ENCODE measurements at regions of chr4 and their contacts with region 1.

Region 1: DNA sequence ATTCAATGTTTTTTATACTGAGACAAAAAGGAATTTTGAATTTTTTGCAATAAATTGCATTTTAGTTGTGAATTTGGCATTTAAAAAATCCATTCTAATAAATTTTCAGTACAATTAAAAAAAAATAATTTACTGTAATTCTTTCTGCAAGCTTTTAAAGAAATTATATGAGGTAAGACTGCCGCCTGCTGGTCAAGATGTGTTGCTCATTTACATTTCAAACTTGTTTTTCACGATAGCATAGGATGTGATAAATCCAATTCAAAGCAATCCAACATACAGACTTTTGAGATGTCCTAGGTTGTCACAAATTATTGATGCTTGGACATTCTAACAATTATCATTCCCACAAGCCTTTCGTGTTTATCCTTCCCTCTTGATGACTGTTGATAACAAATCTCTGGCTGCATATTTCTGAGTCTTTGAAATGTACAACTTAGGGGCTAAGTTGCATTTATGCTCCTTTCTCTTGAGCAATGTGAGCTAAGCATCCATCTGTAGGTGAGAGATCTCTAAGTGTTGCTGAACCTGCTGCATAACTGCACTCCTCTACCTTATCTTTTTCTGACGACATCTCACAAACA is 21.7 kb upstream of the MFAP3L start:
- DNase-seq: peak; percentile 65
- ATAC-seq: no peak
- H3K4me3 ChIP-seq: no peak overlapping the region
- H3K27ac ChIP-seq: no peak overlapping the region
- H3K4me1 ChIP-seq: no peaks in the 10 kb centered on the region
- H3K27me3 ChIP-seq: no peaks in the 10 kb centered on the region
- CTCF ChIP-seq: peak; percentile 71

Region 2: GRCh38 chr4:168784786-168785461 is 1262.9 kb before region 1 on chr4:
- CTCF ChIA-PET with region 1: no interaction called
- POLR2A ChIA-PET with region 1: no interaction called
- intact Hi-C with region 1: no loop called
- DNase-seq: peak; percentile 10
- ATAC-seq: no peak
- H3K4me3 ChIP-seq: no peak overlapping the region
- H3K27ac ChIP-seq: no peak overlapping the region
- H3K4me1 ChIP-seq: no peaks in the 10 kb centered on the region
- H3K27me3 ChIP-seq: no peaks in the 10 kb centered on the region
- CTCF ChIP-seq: no peak

Region 3: DNA sequence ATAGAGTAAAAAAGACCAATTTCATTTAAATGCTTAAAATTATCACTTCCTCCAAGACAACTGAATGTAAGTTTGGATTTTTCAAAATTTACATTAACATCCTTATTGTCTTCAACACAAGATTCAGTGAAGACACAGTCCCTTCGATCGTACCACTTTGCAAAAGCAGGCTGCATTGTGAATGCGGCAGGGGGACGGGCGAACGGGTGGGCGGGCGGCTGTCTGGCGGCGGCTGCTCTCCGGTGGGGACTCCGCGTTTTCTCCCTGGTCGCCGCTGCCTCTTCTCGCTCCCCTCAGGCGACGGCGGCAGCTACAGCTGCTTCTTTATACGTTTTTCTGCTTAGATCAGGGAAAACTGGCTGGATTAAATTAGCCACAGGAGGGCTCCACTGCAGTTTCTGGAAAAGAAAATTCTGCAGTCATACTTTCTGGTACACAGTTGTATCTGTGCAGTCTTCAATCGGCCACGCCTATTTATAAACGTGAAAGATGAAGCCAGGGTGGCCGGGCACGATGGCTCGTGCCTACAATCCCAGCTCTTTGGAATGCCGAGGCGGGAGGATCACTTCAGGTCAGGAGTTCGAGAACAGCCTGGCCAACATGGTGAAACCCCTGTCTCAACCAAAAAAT is 256.2 kb before region 1 on chr4:
- CTCF ChIA-PET with region 1: no interaction called
- POLR2A ChIA-PET with region 1: no interaction called
- intact Hi-C with region 1: loop called (anchors 1 kb)
- DNase-seq: peak; percentile 71
- ATAC-seq: peak; percentile 81
- H3K4me3 ChIP-seq: peak overlapping the region; percentile 58
- H3K27ac ChIP-seq: no peak overlapping the region
- H3K4me1 ChIP-seq: no peaks in the 10 kb centered on the region
- H3K27me3 ChIP-seq: peaks cover 22% of the 10 kb centered on the region
- CTCF ChIP-seq: peak; percentile 58

Region 4: DNA sequence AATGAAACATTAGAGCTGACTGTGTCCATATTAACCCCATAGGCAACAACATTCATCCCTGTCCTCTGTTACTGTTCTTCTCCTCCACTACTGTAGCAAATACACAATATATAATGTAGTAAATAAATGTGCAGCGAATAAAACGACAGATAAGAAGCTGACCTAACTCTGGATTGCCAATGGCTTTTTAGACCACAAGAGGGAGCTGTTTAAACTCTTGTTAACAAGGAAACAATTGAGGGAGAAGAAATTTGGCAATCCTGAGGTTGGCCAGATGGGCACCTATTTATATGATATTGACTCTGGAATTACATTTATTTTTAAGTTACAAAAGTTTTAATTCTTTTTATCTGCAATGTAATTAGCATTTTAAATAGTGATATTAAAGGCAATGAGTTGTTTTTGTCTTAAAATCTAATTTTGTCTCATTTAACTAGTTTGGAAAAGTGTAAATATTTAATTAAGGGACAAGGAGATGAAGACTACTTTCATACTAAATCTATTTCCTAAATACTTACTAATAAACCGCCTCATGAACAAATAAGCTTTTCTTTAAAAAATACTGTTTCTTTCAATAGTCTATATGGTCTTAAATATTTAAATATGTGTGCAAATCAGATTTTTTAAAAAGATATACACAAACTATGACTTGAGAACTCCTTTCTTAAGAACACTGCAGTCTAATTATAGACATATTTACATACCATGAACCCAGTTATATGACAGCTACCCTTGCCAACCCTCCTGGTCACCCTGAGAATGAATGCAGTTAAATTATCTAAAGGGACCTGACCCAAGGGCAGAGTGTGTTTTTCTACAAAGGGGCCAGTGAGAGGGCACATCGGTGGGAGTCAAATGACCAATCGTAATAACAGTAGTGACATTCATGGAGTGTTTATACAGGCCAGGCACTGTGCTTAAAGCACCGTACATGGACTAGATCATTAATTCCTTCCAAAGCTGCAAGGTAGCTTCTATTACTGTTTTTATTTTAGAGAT is 237.2 kb before region 1 on chr4:
- CTCF ChIA-PET with region 1: interaction called, 5 read pairs
- POLR2A ChIA-PET with region 1: no interaction called
- intact Hi-C with region 1: loop called (anchors 1 kb)
- DNase-seq: peak; percentile 81
- ATAC-seq: peak; percentile 57
- H3K4me3 ChIP-seq: no peak overlapping the region
- H3K27ac ChIP-seq: no peak overlapping the region
- H3K4me1 ChIP-seq: no peaks in the 10 kb centered on the region
- H3K27me3 ChIP-seq: no peaks in the 10 kb centered on the region; the same call in 1 of the 2 replicates
- CTCF ChIP-seq: peak; percentile 78

Measured in PC-3 (cell line).